ENCODE measurements at regions of chr19 and their contacts with region 1.

Region 1: GRCh38 chr19:52200044-52200443 is 10.2 kb downstream of the PPP2R1A start:
- DNase-seq: no peak
- H3K4me3 ChIP-seq: no peak overlapping the region
- H3K27ac ChIP-seq: no peak overlapping the region
- H3K4me1 ChIP-seq: no peaks in the 10 kb centered on the region
- H3K27me3 ChIP-seq: no peaks in the 10 kb centered on the region
- CTCF ChIP-seq: no peak
- EP300 ChIP-seq: no peak
- POLR2A ChIP-seq: no peak
- RAD21 ChIP-seq: no peak

Region 2: DNA sequence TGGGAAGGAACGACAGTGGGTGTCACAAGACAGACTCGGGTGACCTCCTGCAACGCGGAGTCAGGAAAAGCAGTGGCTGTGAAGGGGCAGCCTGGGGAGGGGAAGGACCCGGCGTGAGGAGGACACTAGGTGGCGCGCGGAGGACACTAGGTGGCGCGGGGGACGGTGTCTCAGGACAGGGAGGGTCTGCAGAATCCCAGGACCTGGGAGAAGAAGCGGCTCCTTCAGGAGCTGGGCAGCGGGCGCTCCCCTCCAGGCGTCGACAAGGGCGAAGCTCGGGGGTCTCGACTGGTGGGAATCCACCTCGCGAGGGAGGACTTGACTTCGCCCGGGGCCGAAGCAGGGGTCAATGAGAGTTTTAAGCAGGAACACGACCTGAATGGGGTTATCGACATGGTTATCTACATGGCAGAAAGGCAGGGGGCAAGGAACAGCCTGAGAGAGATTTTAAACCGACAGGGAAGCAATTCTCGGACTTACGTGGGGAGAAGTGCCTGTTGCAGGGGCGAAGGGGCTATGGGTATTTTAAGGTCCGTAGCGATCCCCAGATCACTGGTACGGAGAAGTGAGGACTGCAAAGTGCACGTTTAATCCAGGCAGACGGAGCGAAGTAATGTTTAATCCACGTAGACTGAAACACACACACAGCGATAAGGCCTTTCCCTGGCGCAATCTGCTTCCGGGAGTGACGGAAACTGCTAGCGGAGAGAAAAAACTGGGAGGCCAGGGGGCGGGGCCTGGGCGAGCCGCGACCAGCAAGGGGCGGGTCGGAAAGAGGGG is 60.6 kb before region 1 on chr19 and contains the start of gene ZNF616:
- CTCF ChIA-PET with region 1: interaction called, 3 read pairs
- POLR2A ChIA-PET with region 1: interaction called, 14 read pairs
- DNase-seq: peak; percentile 85 to 99
- H3K4me3 ChIP-seq: peak within 1 kb of the TSS; percentile 82 to 99 (median 96)
- H3K27ac ChIP-seq: peak within 1 kb of the TSS; percentile 81
- H3K4me1 ChIP-seq: peaks cover 0 to 4% (median 0%) of the 10 kb centered on the region in 4 experiments; a peak in 2 of 7 replicates
- H3K27me3 ChIP-seq: no peaks in the 10 kb centered on the region
- CTCF ChIP-seq: peak; percentile 70 to 80 (median 73)
- EP300 ChIP-seq: no peak
- POLR2A ChIP-seq: peak; percentile 47 to 64; a peak in 2 of 3 replicates
- RAD21 ChIP-seq: peak; percentile 73 to 82
- total RNA-seq, gene ZNF616: 40.2 and 40.5 TPM in 2 replicates

Region 3: DNA sequence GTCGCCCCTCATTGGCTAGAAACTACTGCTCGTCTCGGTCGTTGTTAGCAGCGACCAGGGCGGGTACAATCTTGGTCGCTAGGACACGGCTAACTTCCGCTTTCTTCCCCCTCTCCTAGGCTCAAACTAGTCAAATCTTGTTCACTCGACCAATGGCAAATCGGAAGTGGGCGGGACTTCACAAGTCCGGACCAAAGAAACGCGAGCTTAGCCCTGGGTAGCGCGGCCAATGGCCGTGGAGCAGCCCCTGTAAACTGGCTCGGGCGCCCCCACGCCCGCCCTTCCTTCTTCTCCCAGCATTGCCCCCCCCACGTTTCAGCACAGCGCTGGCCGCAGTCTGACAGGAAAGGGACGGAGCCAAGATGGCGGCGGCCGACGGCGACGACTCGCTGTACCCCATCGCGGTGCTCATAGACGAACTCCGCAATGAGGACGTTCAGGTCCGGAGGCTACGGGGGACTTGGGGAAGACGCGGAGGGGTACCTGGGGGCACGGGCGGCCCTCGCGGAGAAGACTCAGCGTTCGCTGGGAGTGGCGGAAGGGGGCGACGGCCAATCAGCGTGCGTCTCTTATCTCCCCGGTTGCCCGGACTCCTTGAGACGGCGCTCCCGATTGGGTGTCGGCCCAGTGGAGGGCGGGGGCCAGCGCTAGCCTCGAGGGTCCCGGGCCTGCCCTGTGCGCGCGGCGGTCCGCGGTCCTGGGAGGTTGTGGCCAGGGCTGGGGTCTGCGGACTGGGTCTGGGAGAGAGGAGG is 10.1 kb before region 1 on chr19 and contains the start of gene PPP2R1A:
- CTCF ChIA-PET with region 1: interaction called, 16 read pairs
- POLR2A ChIA-PET with region 1: interaction called, 14 read pairs
- DNase-seq: peak; percentile 98 to 100
- H3K4me3 ChIP-seq: peak within 1 kb of the TSS; percentile 71 to 95 (median 88)
- H3K27ac ChIP-seq: peak within 1 kb of the TSS; percentile 98
- H3K4me1 ChIP-seq: peaks cover 3 to 8% (median 5%) of the 10 kb centered on the region in 4 experiments
- H3K27me3 ChIP-seq: no peaks in the 10 kb centered on the region
- CTCF ChIP-seq: no peak
- EP300 ChIP-seq: no peak
- POLR2A ChIP-seq: peak; percentile 70 to 87; a peak in 2 of 3 replicates
- RAD21 ChIP-seq: no peak
- total RNA-seq, gene PPP2R1A: 378 and 382 TPM in 2 replicates

Region 4: GRCh38 chr19:52214186-52214585 is 14.1 kb after region 1 on chr19:
- CTCF ChIA-PET with region 1: interaction called, 5 read pairs
- POLR2A ChIA-PET with region 1: interaction called, 13 read pairs
- DNase-seq: no peak
- H3K4me3 ChIP-seq: no peak overlapping the region
- H3K27ac ChIP-seq: no peak overlapping the region
- H3K4me1 ChIP-seq: no peaks in the 10 kb centered on the region
- H3K27me3 ChIP-seq: no peaks in the 10 kb centered on the region
- CTCF ChIP-seq: no peak
- EP300 ChIP-seq: no peak
- POLR2A ChIP-seq: no peak
- RAD21 ChIP-seq: no peak

Region 5: DNA sequence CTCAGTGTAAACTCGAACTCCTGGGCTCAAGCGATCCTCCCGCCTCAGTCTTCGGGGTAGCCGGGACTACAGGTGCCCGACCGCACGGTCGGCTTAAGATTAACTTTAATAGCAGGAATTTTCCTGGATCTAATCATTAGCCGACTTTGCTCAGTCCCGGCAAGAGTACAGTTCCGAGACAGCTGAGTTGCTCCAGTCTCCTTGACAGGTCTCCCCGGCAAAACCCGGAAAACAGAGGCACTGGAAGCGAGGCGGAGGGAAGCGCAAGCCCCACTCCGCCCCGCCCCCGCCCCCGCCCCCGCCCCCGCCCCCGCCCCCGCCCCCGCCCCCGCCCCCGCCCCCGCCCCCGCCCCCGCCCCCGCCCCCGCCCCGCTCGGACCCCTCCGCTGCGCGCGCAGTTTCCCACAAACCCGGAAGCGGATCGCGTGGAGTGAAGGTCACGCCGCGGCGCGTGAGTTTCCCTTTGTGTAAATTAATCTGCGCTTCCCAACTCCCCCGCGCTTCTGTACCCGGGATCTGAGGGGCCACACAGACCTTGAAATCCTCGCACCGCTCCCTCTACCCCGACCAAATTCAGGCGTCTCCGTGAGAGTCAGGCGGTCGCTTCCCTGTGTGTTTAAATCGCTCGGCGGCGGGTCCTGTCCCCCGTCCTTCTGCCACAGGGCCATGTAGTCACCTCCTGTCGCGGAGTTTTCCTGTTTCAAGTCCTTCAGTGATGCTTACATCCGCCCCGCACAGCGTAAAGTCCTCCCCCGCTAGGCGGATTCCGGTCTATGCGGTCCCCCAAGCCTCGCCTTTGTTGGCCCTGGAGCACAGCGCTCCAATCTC is 96.9 kb after region 1 on chr19 and contains the start of gene ZNF480:
- CTCF ChIA-PET with region 1: no interaction called
- POLR2A ChIA-PET with region 1: no interaction called
- DNase-seq: peak; percentile 19 to 72
- H3K4me3 ChIP-seq: peak within 1 kb of the TSS; percentile 85 to 98 (median 94)
- H3K27ac ChIP-seq: peak within 1 kb of the TSS; percentile 49; the same call in 1 of the 2 replicates
- H3K4me1 ChIP-seq: no peaks in the 10 kb centered on the region; a peak in 2 of 7 replicates
- H3K27me3 ChIP-seq: no peaks in the 10 kb centered on the region
- CTCF ChIP-seq: no peak
- EP300 ChIP-seq: no peak
- POLR2A ChIP-seq: no peak
- RAD21 ChIP-seq: no peak
- total RNA-seq, gene ZNF480: 27.5 and 32.9 TPM in 2 replicates

Region 6: DNA sequence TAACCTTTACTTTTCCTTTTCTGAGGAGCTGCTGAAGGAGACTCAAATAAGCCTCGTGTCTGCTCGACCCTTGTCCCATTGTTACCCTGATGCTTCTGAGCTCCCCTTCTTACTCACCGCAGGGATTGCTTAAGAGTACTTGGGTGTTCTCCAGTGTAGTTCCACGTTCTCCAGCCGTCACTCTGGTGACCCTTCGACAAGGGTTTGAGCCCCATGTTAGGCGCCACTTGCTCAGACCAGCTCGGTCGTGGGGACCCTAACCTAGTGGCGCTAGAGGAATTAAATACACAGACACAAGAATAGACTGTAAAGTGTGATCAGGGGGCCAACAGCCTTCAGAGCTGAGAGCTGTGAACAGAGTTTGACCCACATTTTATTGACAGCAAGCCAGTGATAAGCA is 107.2 kb after region 1 on chr19:
- CTCF ChIA-PET with region 1: no interaction called
- POLR2A ChIA-PET with region 1: no interaction called
- DNase-seq: peak in 1 of 2 experiments; percentile 53
- H3K4me3 ChIP-seq: no peak overlapping the region
- H3K27ac ChIP-seq: no peak overlapping the region
- H3K4me1 ChIP-seq: no peaks in the 10 kb centered on the region
- H3K27me3 ChIP-seq: no peaks in the 10 kb centered on the region
- CTCF ChIP-seq: no peak
- EP300 ChIP-seq: no peak
- POLR2A ChIP-seq: no peak
- RAD21 ChIP-seq: no peak

Measured in H1 (cell line).